ENCODE measurements at regions of chr10 and their contacts with region 1.

Region 1: DNA sequence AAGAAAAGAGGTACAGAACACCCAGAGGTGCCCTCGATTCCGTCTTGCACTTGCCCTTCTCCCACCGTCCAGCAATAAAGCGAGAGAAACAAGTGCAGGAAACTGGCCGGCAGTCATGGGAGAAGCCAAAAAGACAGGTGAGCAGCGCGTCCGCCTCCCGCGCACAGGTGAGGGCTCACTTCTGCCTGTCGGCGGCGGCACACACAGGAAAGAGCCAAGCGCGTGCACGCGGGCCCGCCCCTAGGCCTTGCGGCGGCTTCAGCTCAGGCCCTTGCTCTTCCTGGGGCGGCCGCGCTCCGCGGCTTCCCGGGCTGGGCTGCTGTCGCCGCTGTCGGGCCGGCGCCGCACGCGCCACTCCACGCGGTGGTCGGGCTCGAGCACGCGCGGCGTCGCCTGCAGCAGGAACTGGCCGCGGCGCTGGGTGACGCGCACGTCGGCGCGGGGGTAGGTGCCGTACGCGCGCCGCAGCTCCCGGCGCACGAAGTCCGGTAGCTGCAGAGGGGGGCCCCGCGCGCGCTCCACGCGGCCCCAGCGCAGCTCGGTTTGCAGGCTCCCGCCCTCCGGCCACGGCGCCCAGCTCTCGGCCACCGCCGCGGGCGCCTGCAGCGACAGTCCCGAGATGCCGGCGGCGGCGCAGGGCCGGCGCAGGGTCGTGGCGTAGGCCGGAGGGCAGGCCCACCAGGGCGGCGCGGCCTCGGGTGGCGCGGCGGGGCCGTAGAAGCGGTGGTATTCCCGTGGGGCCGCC is 977 bp downstream of the C10orf95 start:
- DNase-seq: peak; percentile 82
- ATAC-seq: peak; percentile 79
- H3K4me3 ChIP-seq: peak overlapping the region; percentile 92
- H3K27ac ChIP-seq: peak overlapping the region; percentile 55
- H3K4me1 ChIP-seq: peaks cover 20% of the 10 kb centered on the region
- H3K27me3 ChIP-seq: no peaks in the 10 kb centered on the region
- CTCF ChIP-seq: no peak

Region 2: DNA sequence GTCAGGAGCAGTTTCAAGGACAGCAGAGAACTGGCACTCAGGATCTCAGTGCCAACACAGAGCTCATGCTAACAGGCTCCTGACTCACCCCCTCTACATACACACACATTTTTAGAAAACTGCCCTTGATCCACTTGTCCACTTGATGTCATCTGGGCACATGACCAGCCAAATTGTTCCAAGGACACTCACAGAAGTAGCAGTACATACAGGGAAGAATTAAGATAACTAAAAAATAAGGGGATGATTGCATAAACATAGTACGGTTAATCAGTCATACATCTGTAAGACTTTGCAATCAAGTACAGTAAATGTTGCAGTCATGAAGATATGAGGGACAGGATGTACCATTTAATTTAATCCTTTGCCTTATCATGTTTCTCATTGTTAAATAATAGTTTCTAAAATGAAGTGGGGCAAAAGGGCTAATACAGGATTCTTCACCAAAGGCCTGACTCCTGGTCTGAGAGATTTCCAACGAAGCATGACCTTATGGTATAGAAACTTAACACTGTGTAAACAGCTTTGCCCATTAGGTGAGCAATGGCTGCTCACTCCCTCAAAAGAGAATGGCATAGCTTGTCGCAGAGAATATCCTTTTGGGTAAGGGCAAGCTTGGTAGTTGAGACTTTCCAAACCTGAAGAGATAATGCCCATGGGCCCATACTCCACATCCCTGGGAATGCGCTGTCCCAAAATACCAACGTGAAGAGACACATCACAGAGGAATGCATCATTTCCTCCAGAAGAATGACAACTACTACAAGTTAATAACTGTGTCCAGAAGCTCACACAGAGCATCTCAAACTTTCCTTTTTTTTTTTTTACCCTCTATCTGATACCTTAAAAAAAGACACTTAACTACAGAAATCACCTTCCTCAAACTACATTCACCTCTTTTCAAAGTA is 488.5 kb before region 1 on chr10:
- CTCF ChIA-PET with region 1: no interaction called
- POLR2A ChIA-PET with region 1: no interaction called
- intact Hi-C with region 1: no loop called
- DNase-seq: peak; percentile 43
- ATAC-seq: peak; percentile 82
- H3K4me3 ChIP-seq: no peak overlapping the region
- H3K27ac ChIP-seq: peak overlapping the region; percentile 33; the same call in 1 of the 2 replicates
- H3K4me1 ChIP-seq: peaks cover 16% of the 10 kb centered on the region
- H3K27me3 ChIP-seq: no peaks in the 10 kb centered on the region
- CTCF ChIP-seq: no peak

Region 3: DNA sequence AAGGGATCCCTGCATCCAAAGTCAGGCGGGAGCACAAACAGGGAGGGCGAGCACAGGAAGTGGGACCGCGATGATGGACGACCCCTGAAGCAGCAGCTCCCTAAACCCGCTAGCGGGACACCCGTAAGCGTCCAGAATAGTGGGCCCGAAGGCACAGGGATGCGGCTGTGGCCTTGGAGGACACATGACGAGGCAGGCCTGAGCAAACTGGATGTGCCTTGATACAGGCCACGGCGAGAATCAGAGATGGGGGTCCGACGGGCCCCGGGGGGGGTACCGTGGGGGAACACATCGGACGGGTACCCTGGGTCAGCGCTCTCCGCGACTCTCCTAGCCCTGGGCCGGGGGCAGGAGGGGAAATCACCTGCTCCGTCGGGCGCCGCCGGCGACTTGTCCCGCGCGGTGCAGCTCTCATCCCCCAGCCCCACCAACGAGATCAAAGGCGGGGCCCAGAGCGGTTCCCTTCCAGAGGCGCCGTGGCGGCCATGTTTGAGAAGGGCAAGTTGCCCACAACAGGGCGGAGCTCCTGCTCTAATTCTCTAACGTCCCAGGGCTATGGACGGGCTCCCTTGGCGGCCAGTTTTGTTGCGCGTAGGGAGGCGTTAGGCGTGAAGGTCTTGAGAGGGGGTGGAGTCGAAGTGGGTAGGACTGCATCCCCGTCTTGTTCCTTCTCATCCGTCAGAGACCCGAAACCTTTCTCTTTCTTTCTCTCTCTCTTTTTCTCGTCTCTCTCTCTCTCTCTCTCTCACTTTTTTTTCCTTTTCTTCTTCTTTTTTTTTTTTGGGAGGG is 18.0 kb before region 1 on chr10 and contains the start of gene CUEDC2:
- CTCF ChIA-PET with region 1: interaction called, 4 read pairs
- POLR2A ChIA-PET with region 1: interaction called, 16 read pairs
- intact Hi-C with region 1: loop called (anchors 1 kb)
- DNase-seq: peak; percentile 95
- ATAC-seq: peak; percentile 93
- H3K4me3 ChIP-seq: peak within 1 kb of the TSS; percentile 85
- H3K27ac ChIP-seq: no peak within 1 kb of the TSS
- H3K4me1 ChIP-seq: peaks cover 5% of the 10 kb centered on the region; the same call in 1 of the 2 replicates
- H3K27me3 ChIP-seq: no peaks in the 10 kb centered on the region
- CTCF ChIP-seq: no peak
- total RNA-seq, gene CUEDC2: 50.6 and 51.4 TPM in 2 replicates

Region 4: GRCh38 chr10:102540023-102540422 is 89.7 kb after region 1 on chr10:
- CTCF ChIA-PET with region 1: no interaction called
- POLR2A ChIA-PET with region 1: no interaction called
- intact Hi-C with region 1: no loop called
- DNase-seq: peak; percentile 11
- ATAC-seq: peak; percentile 63
- H3K4me3 ChIP-seq: no peak overlapping the region
- H3K27ac ChIP-seq: no peak overlapping the region
- H3K4me1 ChIP-seq: no peaks in the 10 kb centered on the region
- H3K27me3 ChIP-seq: no peaks in the 10 kb centered on the region
- CTCF ChIP-seq: peak; percentile 47